Activated T-helper 1 cell treated with anti-CD3 and anti-CD28 coated beads, Interleukin-12 subunit alpha, Interleukin-12 subunit beta, Interleukin-2, Interleukin-4 antibody, amounts not matched to agents 30 ng/mL and 10 ng/mL and 1 ng/mL, durations not matched to agents 14 hours and 24 hours and 36 hours (primary cell): ENCODE measurements at regions of chr12 and their contacts with region 1.

Region 1: DNA sequence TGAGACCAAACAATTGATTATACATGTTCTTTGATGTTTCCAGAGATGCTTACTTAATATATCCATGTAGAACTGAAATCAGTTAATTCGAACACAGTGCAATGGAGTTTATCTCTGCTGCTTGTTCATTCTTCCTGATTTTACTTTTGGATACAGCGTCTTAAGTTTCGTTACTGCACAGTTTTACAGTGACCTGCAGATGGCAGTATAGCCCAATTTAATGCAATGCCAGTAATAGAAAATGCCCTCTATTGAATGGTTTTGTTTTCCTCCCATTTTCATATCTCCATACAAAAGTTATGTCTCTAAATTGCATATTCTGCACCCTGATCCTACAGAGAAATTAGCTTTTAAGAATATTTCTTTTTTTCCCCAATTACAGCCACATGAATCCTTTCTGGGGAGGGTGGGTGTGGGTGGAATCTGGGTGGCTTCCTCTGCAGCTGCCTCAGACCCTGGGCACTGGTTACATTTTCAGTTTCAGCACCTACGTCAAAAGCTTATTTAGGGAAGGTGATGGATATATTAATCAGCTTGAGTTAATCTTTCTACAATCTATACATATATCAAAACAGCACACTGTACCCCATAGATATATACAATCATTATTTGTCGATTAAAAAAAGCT is 101.1 kb upstream of the DCD start:
- DNase-seq: peak; percentile 31
- H3K4me3 Mint-ChIP-seq: no peak overlapping the region
- H3K27ac Mint-ChIP-seq: no peak overlapping the region
- H3K4me1 Mint-ChIP-seq: peaks cover 21% of the 10 kb centered on the region
- H3K27me3 Mint-ChIP-seq: peaks cover 5% of the 10 kb centered on the region

Region 2: GRCh38 chr12:54701940-54702592 is 47.2 kb before region 1 on chr12:
- intact Hi-C with region 1: loop called (anchors 2 kb)
- DNase-seq: no peak
- H3K4me3 Mint-ChIP-seq: no peak overlapping the region
- H3K27ac Mint-ChIP-seq: no peak overlapping the region
- H3K4me1 Mint-ChIP-seq: no peaks in the 10 kb centered on the region
- H3K27me3 Mint-ChIP-seq: peaks cover 10% of the 10 kb centered on the region

Region 3: DNA sequence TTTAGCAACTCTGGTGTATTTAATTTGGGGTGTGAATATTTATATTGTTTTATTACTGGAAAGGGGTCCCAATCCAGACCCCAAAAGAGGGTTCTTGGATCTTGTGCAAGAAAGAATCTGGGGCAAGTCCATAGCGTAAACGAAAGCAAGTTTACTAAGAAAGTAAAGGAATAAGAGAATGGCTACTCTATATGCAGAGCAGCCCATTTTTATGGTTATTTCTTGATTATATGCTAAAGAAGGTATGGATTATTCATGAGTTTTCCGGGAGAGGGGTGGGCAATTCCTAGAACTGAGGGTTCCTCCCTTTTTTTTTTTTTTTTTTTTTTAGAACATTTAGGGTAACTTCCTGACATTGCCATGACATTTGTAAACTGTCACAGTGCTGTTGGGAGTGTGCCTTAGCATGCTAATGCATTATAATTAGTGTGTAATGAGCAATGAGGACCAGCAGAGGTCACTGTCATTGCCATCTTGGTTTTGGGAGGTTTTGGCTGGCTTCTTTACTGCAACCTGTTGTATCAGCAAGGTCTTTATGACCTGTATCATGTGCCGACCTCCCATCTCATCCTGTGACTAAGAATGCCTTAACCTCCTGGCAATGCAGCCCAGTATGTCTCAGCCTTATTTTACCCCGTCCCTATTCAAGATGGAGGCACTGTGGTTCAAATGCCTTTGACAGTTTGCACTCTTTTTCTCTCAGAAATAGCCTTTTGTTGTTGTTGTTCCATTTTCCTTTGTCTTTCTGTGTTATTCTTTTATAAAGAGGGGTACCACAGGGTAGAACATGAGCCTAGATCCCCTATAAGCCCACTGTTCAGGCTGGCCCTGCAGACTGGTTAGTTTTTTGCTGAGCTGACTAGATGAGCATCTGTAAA is 25.7 kb before region 1 on chr12:
- intact Hi-C with region 1: loop called (anchors 1 kb)
- DNase-seq: no peak
- H3K4me3 Mint-ChIP-seq: no peak overlapping the region
- H3K27ac Mint-ChIP-seq: no peak overlapping the region
- H3K4me1 Mint-ChIP-seq: peaks cover 10% of the 10 kb centered on the region
- H3K27me3 Mint-ChIP-seq: peaks cover 14% of the 10 kb centered on the region

Region 4: DNA sequence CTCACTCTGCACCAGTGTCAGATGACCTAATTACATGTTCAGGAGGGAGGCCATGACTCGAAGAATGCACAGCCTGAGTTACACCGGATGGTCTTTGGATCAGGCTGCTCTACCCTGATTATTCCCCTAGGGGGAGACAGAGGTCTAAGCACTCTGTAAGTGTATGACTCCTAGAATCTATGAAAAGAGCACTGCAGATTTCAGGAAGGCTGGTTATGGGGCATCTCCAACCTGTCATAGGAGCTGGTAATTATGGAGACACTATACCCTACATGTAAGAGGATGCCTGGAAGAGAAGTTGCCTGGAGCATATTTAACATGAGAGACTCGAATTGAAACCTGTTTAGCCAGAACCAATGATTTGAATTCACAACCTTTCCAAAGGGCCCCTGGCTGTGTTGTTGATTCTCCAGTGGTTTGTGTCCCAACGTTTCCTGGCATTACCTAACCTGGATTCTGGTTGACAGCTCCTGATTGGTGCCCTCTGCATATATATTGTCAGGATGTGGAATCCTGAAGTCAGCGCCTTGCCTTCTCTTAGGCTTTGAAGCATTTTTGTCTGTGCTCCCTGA is 104.8 kb after region 1 on chr12 and contains the start of gene MUCL1:
- intact Hi-C with region 1: loop called (anchors 1 kb)
- DNase-seq: peak; percentile 66
- H3K4me3 Mint-ChIP-seq: no peak within 1 kb of the TSS
- H3K27ac Mint-ChIP-seq: no peak within 1 kb of the TSS
- H3K4me1 Mint-ChIP-seq: peaks cover 15% of the 10 kb centered on the region
- H3K27me3 Mint-ChIP-seq: peaks cover 1% of the 10 kb centered on the region
- total RNA-seq, gene MUCL1: not detected in 2 replicates

Region 5: GRCh38 chr12:55142669-55143565 is 393.6 kb after region 1 on chr12:
- intact Hi-C with region 1: loop called (anchors 2 kb)
- DNase-seq: peak; percentile 9
- H3K4me3 Mint-ChIP-seq: no peak overlapping the region
- H3K27ac Mint-ChIP-seq: no peak overlapping the region
- H3K4me1 Mint-ChIP-seq: no peaks in the 10 kb centered on the region
- H3K27me3 Mint-ChIP-seq: peaks cover 5% of the 10 kb centered on the region